Activated CD4-positive, alpha-beta T cell treated with anti-CD3 and anti-CD28 coated beads, Interleukin-2, amount 10 ng/mL, durations not matched to agents 7 days and 5 days (primary cell): ENCODE measurements at regions of chr17 and their contacts with region 1.

Region 1: DNA sequence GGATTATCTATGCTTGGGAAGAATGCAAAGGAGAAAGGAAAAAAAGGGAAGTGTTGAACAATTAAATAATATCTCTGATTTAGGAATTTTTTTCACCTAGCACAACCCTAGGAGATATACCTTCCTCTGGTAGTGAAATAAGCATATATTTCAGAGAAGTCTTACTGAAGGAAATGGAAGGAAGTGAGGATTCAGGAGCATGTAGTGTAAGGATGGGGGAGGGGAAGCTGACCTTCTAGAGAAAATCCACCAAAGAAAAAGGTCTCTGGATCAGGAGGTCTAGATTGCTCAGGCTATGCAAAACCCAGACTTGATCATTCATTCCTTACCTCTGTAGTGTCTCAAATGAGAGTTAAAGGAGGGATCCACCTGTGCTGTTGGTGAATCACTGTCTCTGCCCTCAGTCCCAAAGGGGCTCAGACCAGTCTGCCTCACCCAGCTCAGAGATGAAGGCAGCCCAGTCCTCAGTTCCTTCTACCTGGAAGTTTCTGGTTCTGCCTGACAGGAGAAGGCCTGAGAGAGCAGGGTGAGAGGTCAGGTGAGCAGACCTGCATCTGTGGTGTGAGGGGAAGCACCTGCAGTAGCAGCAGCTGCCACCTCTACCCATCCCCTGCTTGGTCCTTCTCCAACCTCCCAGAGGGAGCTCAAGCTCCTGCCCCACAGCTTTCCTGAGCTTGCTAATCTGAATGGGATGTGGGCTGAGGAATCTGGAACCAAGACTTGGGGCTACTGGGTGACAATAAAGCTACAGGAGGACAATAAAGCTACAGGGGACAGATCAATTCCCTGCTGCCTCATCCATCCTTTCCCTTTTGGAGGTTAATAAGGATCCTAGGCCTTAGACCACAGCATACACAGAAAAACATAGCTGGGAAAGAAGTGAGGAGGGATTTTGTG is 5.1 kb upstream of the TBX4 start:
- DNase-seq: no peak
- H3K4me3 Mint-ChIP-seq: no peak overlapping the region
- H3K27ac Mint-ChIP-seq: no peak overlapping the region
- H3K4me1 Mint-ChIP-seq: no peaks in the 10 kb centered on the region
- H3K27me3 Mint-ChIP-seq: peaks cover 56% of the 10 kb centered on the region

Region 2: DNA sequence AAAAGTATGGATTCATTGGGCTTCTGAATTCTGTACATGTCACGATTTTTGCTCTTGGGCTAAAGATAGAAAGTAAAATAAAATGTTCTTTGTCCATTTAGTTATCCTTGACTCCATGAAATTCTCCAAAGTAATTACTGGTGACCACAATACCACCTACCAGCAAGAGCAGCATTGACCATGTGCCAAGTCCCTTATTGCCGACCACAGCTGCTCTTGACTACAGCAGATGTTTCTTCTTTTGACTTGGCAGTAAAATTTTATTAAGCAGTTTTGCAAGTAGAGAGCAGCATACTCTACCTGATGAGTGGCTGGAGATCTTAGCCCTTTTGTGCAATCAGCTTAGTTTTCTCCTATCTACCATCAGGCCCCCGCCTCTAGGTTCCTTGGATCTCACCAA is 199.7 kb before region 1 on chr17:
- CTCF ChIA-PET with region 1: no interaction called
- POLR2A ChIA-PET with region 1: interaction called, 17 read pairs
- DNase-seq: no peak
- H3K4me3 Mint-ChIP-seq: no peak overlapping the region
- H3K27ac Mint-ChIP-seq: no peak overlapping the region
- H3K4me1 Mint-ChIP-seq: peaks cover 14% of the 10 kb centered on the region
- H3K27me3 Mint-ChIP-seq: no peaks in the 10 kb centered on the region

Region 3: GRCh38 chr17:61431594-61432311 is 15.4 kb before region 1 on chr17:
- CTCF ChIA-PET with region 1: no interaction called
- POLR2A ChIA-PET with region 1: no interaction called
- DNase-seq: no peak
- H3K4me3 Mint-ChIP-seq: no peak overlapping the region
- H3K27ac Mint-ChIP-seq: no peak overlapping the region
- H3K4me1 Mint-ChIP-seq: no peaks in the 10 kb centered on the region
- H3K27me3 Mint-ChIP-seq: peaks cover 41% of the 10 kb centered on the region